AG04449 (cell line): ENCODE measurements at regions of chr11 and their contacts with region 1.

Region 1: DNA sequence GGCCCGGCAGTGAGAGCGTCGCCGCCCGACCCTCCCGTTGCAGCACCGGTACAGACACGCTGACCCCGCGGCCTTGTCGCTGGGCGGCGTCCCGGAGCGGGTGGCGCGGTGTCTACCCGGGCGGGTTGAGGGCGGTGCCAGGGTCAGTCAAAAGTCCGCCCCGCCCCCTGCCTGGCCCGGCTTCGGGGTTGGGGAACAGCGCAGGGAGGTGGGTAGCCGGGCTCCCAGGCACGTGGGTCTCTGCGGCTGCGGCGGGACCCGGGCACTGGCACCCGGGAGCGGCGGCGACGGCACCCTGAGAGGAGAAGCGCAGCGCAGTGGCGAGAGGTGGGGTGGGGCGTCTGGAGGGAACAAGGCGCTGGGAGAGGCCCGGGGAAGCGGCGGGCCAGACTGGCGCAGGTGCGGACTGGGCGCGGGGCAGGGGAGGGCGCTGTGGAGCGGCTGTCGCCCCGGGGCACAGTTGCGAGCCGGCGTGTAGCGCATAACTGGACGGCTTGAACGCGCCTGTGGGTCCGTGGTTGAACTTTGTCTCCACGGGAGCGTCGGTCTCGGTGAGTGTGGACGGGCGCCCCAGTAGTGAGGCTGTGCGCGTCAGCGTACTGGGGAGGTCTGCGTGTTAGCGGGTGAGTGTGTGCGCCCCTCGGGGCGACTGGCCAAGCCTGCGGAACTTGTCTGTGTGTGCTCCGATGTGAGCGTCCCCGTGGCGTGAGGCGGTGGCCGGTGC is at the start of gene P2RY2:
- DNase-seq: no peak
- H3K4me3 ChIP-seq: peak within 1 kb of the TSS; percentile 44
- CTCF ChIP-seq: peak; percentile 62

Region 2: GRCh38 chr11:73201249-73201648 is 17.0 kb before region 1 on chr11:
- CTCF ChIA-PET with region 1: interaction called, 12 read pairs
- POLR2A ChIA-PET with region 1: no interaction called
- DNase-seq: no peak
- H3K4me3 ChIP-seq: no peak overlapping the region
- CTCF ChIP-seq: no peak

Region 3: GRCh38 chr11:73236854-73237253 is 18.6 kb after region 1 on chr11:
- CTCF ChIA-PET with region 1: interaction called, 17 read pairs
- POLR2A ChIA-PET with region 1: no interaction called
- DNase-seq: no peak
- H3K4me3 ChIP-seq: no peak overlapping the region
- CTCF ChIP-seq: peak; percentile 34

Region 4: DNA sequence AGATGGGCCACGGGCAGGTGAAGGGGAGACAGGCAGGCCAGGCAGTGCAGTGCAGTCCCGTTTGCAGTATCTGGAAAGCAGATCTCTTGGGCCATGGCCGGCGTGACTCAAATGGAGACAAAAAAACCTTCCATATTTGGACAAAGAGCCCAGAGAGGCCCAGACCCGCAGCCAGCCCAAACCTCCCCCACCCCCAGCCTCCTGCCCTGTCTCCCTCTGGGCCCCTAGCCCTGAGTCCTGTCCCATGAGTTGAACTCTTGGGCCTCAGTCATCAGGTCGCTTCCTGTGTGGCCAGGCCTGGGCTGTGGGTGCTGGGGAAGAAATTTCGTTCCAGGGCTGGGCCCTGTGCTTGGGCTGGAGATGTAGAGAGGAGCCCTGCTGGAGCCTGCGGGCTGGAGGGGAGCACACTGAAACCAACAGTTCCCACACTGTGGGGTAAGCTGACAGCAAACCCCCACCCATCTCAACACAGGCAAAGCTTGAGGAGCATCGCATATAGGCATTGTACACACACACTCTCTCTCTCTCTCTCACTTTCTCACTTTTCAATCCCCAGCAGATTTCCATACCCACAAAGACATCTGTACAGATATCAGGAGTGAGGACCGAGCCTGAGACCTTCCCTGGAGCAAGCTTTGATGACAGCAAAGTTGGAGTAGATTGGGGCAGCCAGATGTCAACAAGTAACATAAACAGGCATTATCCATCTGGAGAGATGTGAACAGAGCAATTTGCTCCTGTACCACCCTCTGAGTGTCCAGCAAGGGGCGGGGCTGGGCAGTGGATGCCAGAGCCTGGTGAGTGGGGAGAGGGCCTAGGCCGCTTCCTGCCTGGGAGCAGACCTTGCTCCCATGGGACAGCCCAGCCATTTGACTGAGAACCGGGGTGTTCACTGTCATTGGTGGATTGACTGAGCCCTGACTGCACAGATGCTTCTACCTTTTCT is 107.0 kb after region 1 on chr11:
- CTCF ChIA-PET with region 1: no interaction called
- POLR2A ChIA-PET with region 1: no interaction called
- DNase-seq: no peak
- H3K4me3 ChIP-seq: no peak overlapping the region
- CTCF ChIP-seq: no peak

Region 5: DNA sequence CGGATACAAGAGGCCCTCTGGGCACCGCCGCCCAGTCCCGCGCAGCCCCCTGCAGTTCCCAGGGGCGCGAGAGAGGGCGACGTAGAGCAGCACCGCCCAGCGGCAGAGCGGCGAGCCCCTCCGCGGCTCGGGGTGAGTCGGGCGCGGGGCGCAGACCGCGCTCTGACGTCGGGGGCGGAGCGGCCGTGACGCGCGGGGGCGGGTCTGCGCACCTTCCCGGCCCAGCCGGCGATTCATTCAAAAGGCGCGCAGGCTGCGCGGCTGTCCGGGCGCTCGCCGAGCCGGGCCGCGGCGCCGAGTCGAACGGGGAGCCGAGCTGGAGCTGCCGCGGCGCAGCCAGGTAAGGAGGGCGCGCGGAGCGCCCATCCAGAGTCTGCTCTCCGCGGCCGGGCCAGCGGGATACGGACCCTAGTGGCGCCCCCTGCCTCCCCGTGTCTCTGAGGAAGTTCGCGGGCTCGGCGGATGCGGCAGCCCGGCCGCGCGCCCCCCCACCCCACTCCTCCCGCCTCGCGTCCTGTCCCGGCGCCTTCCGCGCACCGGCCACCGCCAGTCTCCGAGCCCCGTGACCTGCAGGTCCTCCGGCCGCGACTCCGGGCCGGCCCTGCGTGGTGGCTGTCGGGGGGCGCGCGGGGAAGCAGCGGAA is 158.0 kb after region 1 on chr11 and contains the start of gene RELT:
- CTCF ChIA-PET with region 1: no interaction called
- POLR2A ChIA-PET with region 1: no interaction called
- DNase-seq: no peak
- H3K4me3 ChIP-seq: peak within 1 kb of the TSS; percentile 79
- CTCF ChIP-seq: peak; percentile 89